Ascending aorta (tissue), 2 donors: ENCODE measurements at regions of chr15 and their contacts with region 1.

Region 1: GRCh38 chr15:68484696-68485400 is 52.9 kb upstream of the ITGA11 start:
- DNase-seq: peak; percentile 42 to 88
- H3K4me3 ChIP-seq: peak overlapping the region; percentile 19 to 51
- H3K27ac ChIP-seq: peak overlapping the region; percentile 91 to 93
- H3K4me1 ChIP-seq: peaks cover 19 to 45% of the 10 kb centered on the region in 2 donors
- H3K27me3 ChIP-seq: no peaks in the 10 kb centered on the region
- CTCF ChIP-seq: no peak

Region 2: GRCh38 chr15:68352401-68353062 is 132.3 kb before region 1 on chr15:
- intact Hi-C with region 1: loop called (anchors 5 kb)
- DNase-seq: peak; percentile 81 to 96
- H3K4me3 ChIP-seq: no peak overlapping the region
- H3K27ac ChIP-seq: peak overlapping the region; percentile 96 to 98
- H3K4me1 ChIP-seq: peaks cover 18 to 62% of the 10 kb centered on the region in 2 donors
- H3K27me3 ChIP-seq: no peaks in the 10 kb centered on the region
- CTCF ChIP-seq: no peak

Region 3: GRCh38 chr15:68431792-68432401 is 53.0 kb before region 1 on chr15 and contains the start of gene ITGA11:
- intact Hi-C with region 1: loop called (anchors 5 kb)
- DNase-seq: peak in 1 of 2 donors; percentile 89
- H3K4me3 ChIP-seq: peak within 1 kb of the TSS; percentile 69 to 83
- H3K27ac ChIP-seq: peak within 1 kb of the TSS; percentile 89 to 93
- H3K4me1 ChIP-seq: peaks cover 3 to 23% of the 10 kb centered on the region in 2 donors
- H3K27me3 ChIP-seq: no peaks in the 10 kb centered on the region
- CTCF ChIP-seq: no peak
- total RNA-seq, gene ITGA11: 136 TPM

Region 4: GRCh38 chr15:68447209-68447608 is 37.6 kb before region 1 on chr15:
- intact Hi-C with region 1: no loop called
- DNase-seq: no peak
- H3K4me3 ChIP-seq: no peak overlapping the region
- H3K27ac ChIP-seq: no peak overlapping the region
- H3K4me1 ChIP-seq: no peaks in the 10 kb centered on the region
- H3K27me3 ChIP-seq: no peaks in the 10 kb centered on the region
- CTCF ChIP-seq: no peak

Region 5: DNA sequence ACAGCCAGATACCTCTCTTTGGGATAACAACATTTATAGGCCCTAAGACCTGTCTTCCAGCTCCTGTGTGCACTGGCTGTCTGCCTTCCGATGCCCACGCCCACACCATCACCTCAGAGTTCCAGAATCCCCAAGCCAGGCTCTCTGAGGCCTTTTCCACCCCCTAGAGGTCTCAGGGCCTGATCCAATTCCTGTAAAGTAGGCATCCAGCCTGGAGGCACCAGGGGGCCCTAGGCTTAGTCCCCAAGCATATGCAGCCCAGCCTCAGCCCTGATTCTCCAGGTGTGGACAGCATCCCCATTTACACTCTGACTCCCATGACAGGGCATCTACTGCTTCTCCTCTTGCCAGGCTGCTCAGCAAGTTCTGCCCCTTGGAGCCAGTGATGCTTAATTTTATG is 21.2 kb after region 1 on chr15:
- intact Hi-C with region 1: no loop called
- DNase-seq: no peak
- H3K4me3 ChIP-seq: no peak overlapping the region
- H3K27ac ChIP-seq: no peak overlapping the region
- H3K4me1 ChIP-seq: peaks cover 0 to 7% of the 10 kb centered on the region in 2 donors
- H3K27me3 ChIP-seq: no peaks in the 10 kb centered on the region
- CTCF ChIP-seq: no peak

Region 6: DNA sequence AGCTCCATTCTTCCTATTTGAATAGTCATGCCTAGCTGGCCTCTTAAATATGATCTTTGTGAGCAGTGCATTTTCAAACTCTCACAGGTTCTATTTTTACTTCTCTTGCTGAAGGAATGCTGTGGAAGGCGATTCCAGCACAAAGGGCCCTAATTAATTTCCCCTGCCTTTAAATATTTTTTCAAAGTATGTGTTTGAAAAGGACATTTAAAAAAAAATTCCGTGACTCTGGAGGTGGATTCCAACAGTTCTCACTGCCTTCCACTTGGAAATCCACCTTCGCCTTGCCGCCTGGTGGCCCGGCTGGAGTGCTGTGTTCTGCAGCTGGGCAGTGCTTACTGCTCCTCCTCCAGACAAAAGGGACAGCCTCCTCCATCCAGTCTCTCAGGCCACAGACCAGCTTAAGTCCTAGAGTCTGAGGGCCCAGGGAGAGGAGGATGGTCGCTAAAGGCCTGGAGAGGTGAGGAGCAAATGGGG is 32.5 kb after region 1 on chr15:
- intact Hi-C with region 1: loop called (anchors 2 kb)
- DNase-seq: peak in 1 of 2 donors; percentile 86
- H3K4me3 ChIP-seq: no peak overlapping the region
- H3K27ac ChIP-seq: peak overlapping the region; percentile 83 to 94
- H3K4me1 ChIP-seq: peaks cover 11 to 19% of the 10 kb centered on the region in 2 donors
- H3K27me3 ChIP-seq: no peaks in the 10 kb centered on the region
- CTCF ChIP-seq: peak; percentile 53 to 65 (median 59)

Region 7: GRCh38 chr15:68536331-68537095 is 51.7 kb after region 1 on chr15:
- intact Hi-C with region 1: loop called (anchors 5 kb)
- DNase-seq: no peak
- H3K4me3 ChIP-seq: peak overlapping the region in 1 of 2 donors; percentile 16
- H3K27ac ChIP-seq: peak overlapping the region; percentile 79 to 92
- H3K4me1 ChIP-seq: peaks cover 0 to 18% of the 10 kb centered on the region in 2 donors
- H3K27me3 ChIP-seq: no peaks in the 10 kb centered on the region
- CTCF ChIP-seq: no peak

Region 8: DNA sequence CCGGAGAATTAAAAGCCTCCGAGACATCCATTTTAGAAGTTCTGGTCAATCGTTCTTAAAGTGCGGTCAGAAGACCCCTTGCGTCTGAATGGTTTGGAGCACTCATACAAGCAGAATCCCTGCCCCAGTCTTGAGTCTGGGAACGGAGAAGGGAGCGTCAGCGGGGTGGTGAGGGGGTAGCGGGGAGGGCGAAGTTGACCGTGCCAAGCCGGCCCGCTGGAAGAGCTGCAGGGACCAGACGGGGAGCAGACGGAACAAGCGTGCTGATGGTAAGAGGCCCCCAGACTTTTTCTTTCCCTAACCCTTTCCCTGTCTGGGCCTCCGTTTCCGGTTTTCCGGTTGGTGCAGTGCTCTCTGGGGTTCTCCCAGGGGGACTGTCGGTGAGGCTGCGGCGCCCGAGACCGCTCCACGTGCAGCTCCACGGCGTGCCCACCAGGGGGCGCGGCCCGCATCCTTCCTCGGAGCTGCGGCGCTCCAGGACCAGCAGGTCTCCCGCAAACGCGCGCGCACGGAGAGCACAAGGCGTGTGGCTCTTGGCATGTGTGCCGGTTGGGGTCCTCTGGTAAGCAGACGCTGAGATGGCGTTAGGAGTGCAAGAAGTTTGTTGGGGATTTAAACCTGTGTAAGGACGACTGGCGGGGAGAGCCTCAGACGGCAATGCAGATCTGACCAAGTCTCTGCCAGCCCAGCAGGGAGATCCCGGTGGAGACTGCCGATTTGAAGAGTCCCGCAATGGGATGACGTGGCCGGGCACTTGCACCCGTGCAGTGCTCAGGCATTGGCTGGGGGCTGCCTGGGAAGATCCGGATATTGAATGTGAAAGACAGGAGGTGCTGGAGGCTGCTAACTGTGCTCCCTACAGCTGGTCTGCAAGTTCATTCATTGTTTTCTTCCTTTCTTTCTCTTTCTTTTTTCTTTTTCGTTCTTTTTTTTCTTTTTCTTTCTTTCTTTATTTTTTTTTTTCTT is 74.8 kb after region 1 on chr15:
- intact Hi-C with region 1: no loop called
- DNase-seq: peak in 1 of 2 donors; percentile 87
- H3K4me3 ChIP-seq: peak overlapping the region; percentile 47 to 61
- H3K27ac ChIP-seq: no peak overlapping the region
- H3K4me1 ChIP-seq: peaks cover 3 to 6% of the 10 kb centered on the region in 2 donors
- H3K27me3 ChIP-seq: no peaks in the 10 kb centered on the region
- CTCF ChIP-seq: peak; percentile 94 to 98 (median 97)

Region 9: DNA sequence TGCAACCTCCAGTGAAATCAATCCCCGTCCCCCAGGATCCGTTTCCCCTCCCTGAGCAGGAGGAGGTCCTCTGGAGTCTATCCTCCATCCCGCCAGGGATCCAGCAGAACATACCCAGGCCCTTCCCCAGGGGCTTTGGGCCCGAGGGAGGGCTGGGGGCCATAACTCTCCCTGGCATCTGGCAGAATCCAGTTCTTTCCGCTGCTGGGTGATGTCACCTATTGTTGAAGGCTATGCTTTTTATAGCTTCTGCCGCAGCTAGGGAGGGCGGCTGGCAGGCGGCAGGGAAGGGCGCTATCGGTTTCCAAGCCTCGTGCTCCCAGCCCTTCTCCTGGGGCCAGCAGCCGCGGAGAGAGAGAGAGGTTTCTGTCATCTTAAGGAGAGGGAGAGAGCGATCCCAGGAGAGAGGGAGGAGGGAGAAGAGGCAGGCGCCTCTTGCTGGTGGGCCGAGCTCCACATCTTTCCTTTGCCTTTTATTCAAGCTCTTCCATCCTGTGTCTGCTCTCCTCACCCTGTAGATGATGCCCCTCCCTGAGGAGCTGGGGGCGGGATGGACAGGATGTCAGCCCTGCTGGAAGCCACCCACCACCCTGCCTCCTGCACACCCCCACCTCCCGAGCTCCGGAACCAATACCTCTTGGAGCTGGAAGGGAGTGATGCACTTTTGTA is 215.7 kb after region 1 on chr15:
- intact Hi-C with region 1: no loop called
- DNase-seq: peak in 1 of 2 donors; percentile 79
- H3K4me3 ChIP-seq: peak overlapping the region in 1 of 2 donors; percentile 55
- H3K27ac ChIP-seq: peak overlapping the region; percentile 65 to 87
- H3K4me1 ChIP-seq: peaks cover 10 to 12% of the 10 kb centered on the region in 2 donors
- H3K27me3 ChIP-seq: no peaks in the 10 kb centered on the region
- CTCF ChIP-seq: no peak